HepG2 (cell line): ENCODE measurements at regions of chr3 and their contacts with region 1.

Region 1: DNA sequence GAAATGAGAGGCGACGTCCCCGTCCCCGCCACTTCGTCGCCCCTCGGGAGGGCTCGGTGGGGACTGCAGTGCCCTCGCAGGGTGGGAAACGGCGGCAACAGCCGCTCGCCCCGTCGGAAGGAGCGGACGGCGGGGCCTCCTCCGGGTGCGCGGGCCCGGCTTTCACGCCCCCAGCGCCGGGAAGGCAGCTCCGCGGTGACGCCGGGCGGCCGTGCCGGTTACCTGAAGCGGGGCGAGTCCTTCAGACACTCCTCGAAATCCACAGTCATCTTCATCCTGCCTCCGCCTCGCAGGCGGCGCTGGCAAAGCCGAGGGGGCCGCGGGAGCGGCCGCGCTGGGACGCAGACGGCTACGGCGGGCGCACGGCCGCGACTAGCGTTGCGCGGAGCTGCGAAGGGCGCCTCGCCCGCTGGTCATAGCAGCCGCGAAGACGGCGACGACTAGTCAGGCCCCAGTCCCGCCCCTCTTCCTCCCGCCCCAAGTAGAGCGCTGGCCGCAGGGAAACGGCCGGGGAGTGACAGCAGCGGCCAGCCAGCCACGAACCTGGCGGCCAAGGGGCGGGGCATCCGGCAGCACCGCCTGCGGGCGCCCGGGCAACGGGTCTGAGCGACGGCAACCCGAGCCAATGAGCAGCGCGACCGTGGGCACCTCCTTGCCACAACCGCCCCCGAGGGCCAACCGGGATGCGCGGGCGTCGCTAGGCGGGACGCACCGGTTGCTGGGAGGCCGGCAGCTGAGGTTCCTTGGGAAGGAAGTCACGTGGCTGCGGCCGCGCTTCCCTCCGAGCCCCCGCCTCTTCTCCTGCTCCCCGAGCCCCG is at the start of gene ACAP2:
- DNase-seq: peak; percentile 96
- ATAC-seq: peak; percentile 94
- H3K4me3 ChIP-seq: peak within 1 kb of the TSS; percentile 72 to 91 (median 79)
- H3K27ac ChIP-seq: peak within 1 kb of the TSS; percentile 89
- H3K4me1 ChIP-seq: peaks cover 50% of the 10 kb centered on the region
- H3K27me3 ChIP-seq: no peaks in the 10 kb centered on the region
- CTCF ChIP-seq: no peak
- EP300 ChIP-seq: no peak
- POLR2A ChIP-seq: peak; percentile 84 to 86
- RAD21 ChIP-seq: peak; percentile 48; the same call in 1 of the 2 replicates
- total RNA-seq, gene ACAP2: 23.9 and 32.2 TPM in 2 replicates

Region 2: DNA sequence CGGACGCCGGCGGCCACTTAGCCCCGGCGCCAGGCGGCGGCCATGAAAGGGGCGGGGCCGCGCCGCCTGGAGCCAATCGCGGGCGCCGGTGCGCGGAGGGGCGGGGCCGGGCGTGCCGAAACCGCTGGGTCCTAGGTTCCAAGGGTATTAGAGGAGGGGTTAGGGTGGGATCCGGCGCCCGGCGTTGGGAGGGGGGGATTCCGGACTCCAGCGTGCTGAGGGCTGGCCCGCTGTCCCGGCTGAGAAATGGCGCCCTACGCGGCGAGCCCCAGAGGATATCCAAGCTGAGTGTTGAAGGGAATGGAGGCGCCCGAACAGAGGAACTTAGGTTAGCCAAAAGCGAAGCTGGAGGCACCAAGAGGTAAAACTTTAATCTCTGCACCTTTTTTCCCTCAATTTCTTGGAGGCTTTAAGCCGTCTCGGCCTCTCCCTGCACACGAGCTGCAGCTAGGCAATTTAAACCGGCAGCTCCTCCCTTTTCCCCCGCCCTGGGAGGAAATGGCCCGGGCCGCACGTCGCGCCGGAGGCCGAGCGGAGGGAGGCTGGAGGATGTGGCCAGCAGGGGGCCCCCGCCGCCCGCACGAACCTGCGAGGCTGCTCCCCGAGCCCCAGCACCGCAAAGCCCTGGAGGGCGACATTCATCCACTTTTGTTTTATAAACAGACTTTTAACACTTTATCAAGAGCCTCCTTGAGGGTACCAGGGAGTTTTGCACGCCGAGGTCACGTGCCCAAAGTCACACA is 171.5 kb before region 1 on chr3 and contains the start of gene XXYLT1:
- CTCF ChIA-PET with region 1: no interaction called
- POLR2A ChIA-PET with region 1: interaction called, 4 read pairs
- in situ Hi-C with region 1: no loop called
- intact Hi-C with region 1: loop called (anchors 1 kb)
- DNase-seq: peak; percentile 81
- ATAC-seq: peak; percentile 89
- H3K4me3 ChIP-seq: peak within 1 kb of the TSS; percentile 89 to 92 (median 91)
- H3K27ac ChIP-seq: peak within 1 kb of the TSS; percentile 85
- H3K4me1 ChIP-seq: peaks cover 60% of the 10 kb centered on the region
- H3K27me3 ChIP-seq: no peaks in the 10 kb centered on the region; a peak in 1 of 5 replicates
- CTCF ChIP-seq: peak; percentile 96
- EP300 ChIP-seq: no peak
- POLR2A ChIP-seq: peak; percentile 52 to 54; a peak in 2 of 4 replicates
- RAD21 ChIP-seq: peak; percentile 95
- total RNA-seq, gene XXYLT1: 10.8 and 19.0 TPM in 2 replicates

Region 3: DNA sequence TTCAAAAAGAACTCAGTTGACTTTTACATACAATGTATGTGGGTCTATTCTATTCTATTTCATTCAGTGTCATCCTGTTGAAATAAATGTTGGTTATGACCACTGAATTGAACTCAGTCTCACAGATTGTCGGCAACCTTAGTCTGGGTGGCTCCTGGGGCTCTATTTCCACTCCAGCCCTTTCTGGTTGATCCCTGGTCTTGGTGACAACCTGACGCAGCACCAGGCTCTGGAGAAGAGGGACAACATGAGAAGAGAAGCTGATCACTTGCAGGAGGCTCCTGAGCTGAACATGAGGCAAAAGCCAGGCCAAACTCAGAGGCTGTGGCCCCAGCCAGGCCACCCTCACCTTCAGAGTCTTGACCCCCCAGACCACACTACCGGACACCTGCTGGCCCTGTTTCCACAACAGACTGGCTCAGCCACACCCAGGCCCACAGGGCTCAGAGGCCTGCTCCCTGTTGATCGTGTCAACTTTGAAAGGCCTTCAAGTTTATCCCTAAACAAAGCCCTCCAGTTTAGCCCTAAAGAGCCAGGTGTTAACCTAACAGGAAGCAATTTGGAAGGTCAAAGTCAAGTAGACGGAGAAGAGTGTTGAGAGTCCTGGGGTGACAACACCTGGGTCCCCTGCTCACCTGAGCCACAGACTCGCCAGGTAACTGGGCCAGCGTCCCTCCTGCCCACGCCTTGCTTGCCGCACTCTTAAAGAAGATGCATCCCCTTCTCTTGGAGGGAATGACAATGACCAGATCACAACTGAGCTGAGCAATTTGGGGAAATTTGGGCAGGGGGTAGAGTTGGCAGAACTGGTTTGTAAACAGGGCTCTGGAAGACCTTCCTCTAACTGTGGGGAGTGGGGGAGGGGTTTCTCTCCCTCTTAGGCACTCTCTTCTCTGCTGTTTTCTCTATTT is 262.6 kb after region 1 on chr3:
- CTCF ChIA-PET with region 1: no interaction called
- POLR2A ChIA-PET with region 1: no interaction called
- in situ Hi-C with region 1: no loop called
- intact Hi-C with region 1: no loop called
- DNase-seq: no peak
- ATAC-seq: peak; percentile 58
- H3K4me3 ChIP-seq: no peak overlapping the region
- H3K27ac ChIP-seq: no peak overlapping the region
- H3K4me1 ChIP-seq: no peaks in the 10 kb centered on the region
- H3K27me3 ChIP-seq: no peaks in the 10 kb centered on the region
- CTCF ChIP-seq: no peak
- EP300 ChIP-seq: no peak
- POLR2A ChIP-seq: 0 out of 4 replicates have a peak, but pooled peaks of 1 of the 2 experiments have one; percentile 17
- RAD21 ChIP-seq: no peak